ENCODE measurements at regions of chr1 and their contacts with region 1.

Region 1: GRCh38 chr1:61741711-61742619 is at the start of gene PATJ:
- DNase-seq: peak; percentile 34 to 73
- ATAC-seq: peak; percentile 75 to 83 (median 82)
- H3K4me3 ChIP-seq: peak within 1 kb of the TSS; percentile 85
- H3K27ac ChIP-seq: peak within 1 kb of the TSS; percentile 96
- H3K4me1 ChIP-seq: peaks cover 17% of the 10 kb centered on the region
- H3K27me3 ChIP-seq: no peaks in the 10 kb centered on the region
- CTCF ChIP-seq: no peak
- total RNA-seq, gene PATJ: 17.1 to 49.9 (median 29.3) TPM

Region 2: GRCh38 chr1:61724813-61725694 is 16.9 kb before region 1 on chr1 and contains the start of gene TM2D1:
- intact Hi-C with region 1: loop called in 1 of 2 experiments (anchors 2 kb)
- DNase-seq: peak; percentile 89 to 95
- ATAC-seq: peak; percentile 99
- H3K4me3 ChIP-seq: peak within 1 kb of the TSS; percentile 96
- H3K27ac ChIP-seq: peak within 1 kb of the TSS; percentile 95
- H3K4me1 ChIP-seq: peaks cover 17% of the 10 kb centered on the region
- H3K27me3 ChIP-seq: no peaks in the 10 kb centered on the region
- CTCF ChIP-seq: no peak
- total RNA-seq, gene TM2D1: 29.5 to 36.8 (median 33.2) TPM

Measured in psoas muscle (tissue), 8 donors.